Endothelial cell of umbilical vein (primary cell): ENCODE measurements at regions of chr11 and their contacts with region 1.

Region 1: GRCh38 chr11:46367244-46367915 is 14.1 kb upstream of the MDK start:
- DNase-seq: peak; percentile 43
- H3K4me3 ChIP-seq: no peak overlapping the region
- H3K27ac ChIP-seq: no peak overlapping the region
- H3K4me1 ChIP-seq: peaks cover 18% of the 10 kb centered on the region
- H3K27me3 ChIP-seq: no peaks in the 10 kb centered on the region
- CTCF ChIP-seq: peak; percentile 77 to 93
- POLR2A ChIP-seq: no peak

Region 2: DNA sequence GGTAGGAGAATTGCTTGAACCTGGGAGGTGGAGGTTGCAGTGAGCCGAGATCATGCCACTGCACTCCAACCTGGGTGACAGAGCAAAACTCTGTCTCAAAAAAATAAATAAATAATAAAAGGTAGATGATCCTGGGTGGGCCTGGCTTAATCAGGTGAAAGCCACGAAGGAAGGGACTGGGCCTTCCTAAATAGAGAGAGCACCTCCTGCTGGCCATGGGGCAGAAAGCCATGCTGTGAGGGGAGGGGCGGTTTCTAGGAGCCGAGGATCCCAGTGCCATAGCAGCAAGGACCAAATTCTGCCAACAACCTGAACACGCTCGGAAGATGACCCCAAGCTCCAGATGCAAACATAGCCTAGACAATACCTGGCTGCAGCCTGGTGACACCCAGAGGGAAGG is 44.6 kb before region 1 on chr11:
- CTCF ChIA-PET with region 1: no interaction called
- POLR2A ChIA-PET with region 1: no interaction called
- dilution Hi-C with region 1: no loop called
- intact Hi-C with region 1: no loop called
- DNase-seq: no peak
- H3K4me3 ChIP-seq: no peak overlapping the region
- H3K27ac ChIP-seq: no peak overlapping the region
- H3K4me1 ChIP-seq: peaks cover 8% of the 10 kb centered on the region
- H3K27me3 ChIP-seq: peaks cover 0 to 3% of the 10 kb centered on the region in 2 experiments
- CTCF ChIP-seq: peak in 1 of 2 donors; percentile 9
- POLR2A ChIP-seq: no peak

Region 3: GRCh38 chr11:46346886-46347636 is 20.3 kb before region 1 on chr11 and contains the start of gene DGKZ:
- CTCF ChIA-PET with region 1: interaction called, 200 read pairs
- POLR2A ChIA-PET with region 1: no interaction called
- dilution Hi-C with region 1: no loop called
- intact Hi-C with region 1: loop called (anchors 1 kb)
- DNase-seq: peak; percentile 84
- H3K4me3 ChIP-seq: peak within 1 kb of the TSS; percentile 32 to 73 (median 61)
- H3K27ac ChIP-seq: peak within 1 kb of the TSS; percentile 19
- H3K4me1 ChIP-seq: peaks cover 40% of the 10 kb centered on the region
- H3K27me3 ChIP-seq: no peaks in the 10 kb centered on the region
- CTCF ChIP-seq: peak; percentile 61 to 90
- POLR2A ChIP-seq: peak; percentile 56
- total RNA-seq, gene DGKZ: 87.1 and 88.8 TPM in 2 replicates

Region 4: GRCh38 chr11:46352063-46352841 is 15.1 kb before region 1 on chr11:
- CTCF ChIA-PET with region 1: interaction called, 200 read pairs
- POLR2A ChIA-PET with region 1: no interaction called
- dilution Hi-C with region 1: no loop called
- intact Hi-C with region 1: loop called (anchors 1 kb)
- DNase-seq: peak; percentile 30
- H3K4me3 ChIP-seq: no peak overlapping the region
- H3K27ac ChIP-seq: no peak overlapping the region
- H3K4me1 ChIP-seq: peaks cover 13% of the 10 kb centered on the region
- H3K27me3 ChIP-seq: no peaks in the 10 kb centered on the region
- CTCF ChIP-seq: peak; percentile 89 to 93
- POLR2A ChIP-seq: no peak

Region 5: GRCh38 chr11:46537537-46538295 is 170.3 kb after region 1 on chr11:
- CTCF ChIA-PET with region 1: interaction called, 4 read pairs
- POLR2A ChIA-PET with region 1: no interaction called
- dilution Hi-C with region 1: no loop called
- intact Hi-C with region 1: loop called (anchors 1 kb)
- DNase-seq: peak; percentile 75
- H3K4me3 ChIP-seq: no peak overlapping the region
- H3K27ac ChIP-seq: no peak overlapping the region
- H3K4me1 ChIP-seq: no peaks in the 10 kb centered on the region
- H3K27me3 ChIP-seq: no peaks in the 10 kb centered on the region
- CTCF ChIP-seq: peak; percentile 88 to 91
- POLR2A ChIP-seq: no peak

Region 6: DNA sequence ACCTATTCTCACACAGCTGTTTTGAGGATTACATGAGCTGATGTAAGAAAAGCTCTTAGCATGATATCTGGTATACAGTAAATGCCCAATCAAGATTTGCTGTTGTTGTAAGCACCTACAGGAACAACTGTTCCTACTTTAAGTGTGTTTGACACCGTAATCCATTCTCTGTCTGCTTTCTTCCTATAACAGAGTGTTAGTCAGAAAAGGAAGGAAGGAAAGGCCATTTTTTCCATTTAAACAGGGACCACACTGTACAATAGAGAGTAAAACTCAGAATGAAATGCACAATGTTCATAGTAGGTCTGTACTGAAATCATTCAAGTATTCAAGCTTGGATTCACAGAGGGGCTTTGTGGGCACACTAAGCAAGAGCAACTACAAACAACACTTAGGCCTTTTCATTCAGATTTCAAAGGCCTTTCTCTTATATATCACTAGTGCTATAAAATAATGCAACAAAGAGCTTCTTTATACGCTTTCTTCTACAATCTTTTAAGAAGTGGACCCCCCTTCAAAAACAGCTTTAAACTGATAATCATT is 1253.5 kb after region 1 on chr11:
- CTCF ChIA-PET with region 1: no interaction called
- POLR2A ChIA-PET with region 1: no interaction called
- dilution Hi-C with region 1: no loop called
- intact Hi-C with region 1: no loop called
- DNase-seq: peak; percentile 68
- H3K4me3 ChIP-seq: no peak overlapping the region
- H3K27ac ChIP-seq: no peak overlapping the region
- H3K4me1 ChIP-seq: no peaks in the 10 kb centered on the region
- H3K27me3 ChIP-seq: no peaks in the 10 kb centered on the region
- CTCF ChIP-seq: no peak
- POLR2A ChIP-seq: no peak